ENCODE measurements at regions of chr7 and their contacts with region 1.

Region 1: GRCh38 chr7:25093268-25093826 is 31.7 kb downstream of the CYCS start:
- DNase-seq: peak; percentile 88
- H3K4me3 Mint-ChIP-seq: no peak overlapping the region
- H3K27ac Mint-ChIP-seq: no peak overlapping the region
- H3K4me1 Mint-ChIP-seq: peaks cover 14% of the 10 kb centered on the region
- H3K27me3 Mint-ChIP-seq: peaks cover 2% of the 10 kb centered on the region

Region 2: GRCh38 chr7:24572997-24573625 is 520.2 kb before region 1 on chr7 and contains the start of gene PALS2:
- CTCF ChIA-PET with region 1: interaction called, 7 read pairs
- POLR2A ChIA-PET with region 1: no interaction called
- intact Hi-C with region 1: loop called (anchors 1 kb)
- DNase-seq: peak; percentile 82
- H3K4me3 Mint-ChIP-seq: peak within 1 kb of the TSS; percentile 83
- H3K27ac Mint-ChIP-seq: peak within 1 kb of the TSS; percentile 70
- H3K4me1 Mint-ChIP-seq: peaks cover 28% of the 10 kb centered on the region
- H3K27me3 Mint-ChIP-seq: peaks cover 3% of the 10 kb centered on the region
- total RNA-seq, gene PALS2: 21.0 to 22.9 TPM

Region 3: DNA sequence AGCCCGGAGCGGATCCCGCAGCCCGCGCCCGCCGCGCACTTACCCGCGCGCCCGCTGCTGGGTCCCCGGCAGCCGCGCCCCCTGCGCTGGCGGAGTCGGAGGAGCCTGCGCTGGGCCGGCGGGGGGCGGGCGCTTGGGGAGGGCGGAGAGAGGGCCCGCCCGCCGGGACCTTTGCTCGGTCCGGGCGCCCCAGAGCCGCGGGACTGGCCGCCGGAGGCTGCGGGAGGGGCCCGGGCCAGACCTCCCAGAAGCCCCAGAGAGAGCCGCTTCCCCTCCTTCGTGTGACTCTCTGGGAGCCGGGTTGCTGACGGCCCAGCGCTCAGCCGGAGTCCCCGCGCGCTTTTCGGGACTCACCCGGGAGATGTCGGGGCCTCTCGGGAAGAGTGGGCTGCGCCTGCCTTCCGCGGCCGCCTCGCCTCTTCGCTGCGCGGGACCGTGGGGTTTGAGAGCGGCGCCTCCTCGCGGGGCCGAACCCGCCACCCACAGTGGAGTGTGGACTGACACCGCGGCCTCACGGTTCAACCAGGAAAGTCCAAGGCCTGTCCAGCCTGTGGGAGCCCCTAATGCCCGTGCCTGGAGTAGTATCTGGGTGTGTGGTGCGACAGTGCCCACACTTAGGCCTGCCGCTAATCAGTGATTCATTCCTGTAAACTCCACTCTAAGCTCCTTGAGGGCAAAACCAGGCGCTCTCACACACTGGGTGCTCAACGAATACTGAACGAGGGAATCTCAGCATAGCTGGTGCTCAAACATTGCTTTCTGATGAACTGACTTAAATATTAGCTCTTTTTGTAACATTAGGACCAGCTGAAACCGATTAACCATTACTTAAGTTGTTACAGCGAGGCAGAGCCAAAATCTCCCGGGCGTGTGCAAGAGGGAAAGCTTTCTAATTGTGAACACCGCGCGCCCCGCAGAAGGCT is 335.7 kb before region 1 on chr7 and contains the start of gene GSDME:
- CTCF ChIA-PET with region 1: interaction called, 11 read pairs
- POLR2A ChIA-PET with region 1: no interaction called
- intact Hi-C with region 1: loop called (anchors 1 kb)
- DNase-seq: peak; percentile 35
- H3K4me3 Mint-ChIP-seq: peak within 1 kb of the TSS; percentile 78
- H3K27ac Mint-ChIP-seq: no peak within 1 kb of the TSS
- H3K4me1 Mint-ChIP-seq: peaks cover 30% of the 10 kb centered on the region
- H3K27me3 Mint-ChIP-seq: peaks cover 45% of the 10 kb centered on the region
- total RNA-seq, gene GSDME: 4.7 TPM

Region 4: DNA sequence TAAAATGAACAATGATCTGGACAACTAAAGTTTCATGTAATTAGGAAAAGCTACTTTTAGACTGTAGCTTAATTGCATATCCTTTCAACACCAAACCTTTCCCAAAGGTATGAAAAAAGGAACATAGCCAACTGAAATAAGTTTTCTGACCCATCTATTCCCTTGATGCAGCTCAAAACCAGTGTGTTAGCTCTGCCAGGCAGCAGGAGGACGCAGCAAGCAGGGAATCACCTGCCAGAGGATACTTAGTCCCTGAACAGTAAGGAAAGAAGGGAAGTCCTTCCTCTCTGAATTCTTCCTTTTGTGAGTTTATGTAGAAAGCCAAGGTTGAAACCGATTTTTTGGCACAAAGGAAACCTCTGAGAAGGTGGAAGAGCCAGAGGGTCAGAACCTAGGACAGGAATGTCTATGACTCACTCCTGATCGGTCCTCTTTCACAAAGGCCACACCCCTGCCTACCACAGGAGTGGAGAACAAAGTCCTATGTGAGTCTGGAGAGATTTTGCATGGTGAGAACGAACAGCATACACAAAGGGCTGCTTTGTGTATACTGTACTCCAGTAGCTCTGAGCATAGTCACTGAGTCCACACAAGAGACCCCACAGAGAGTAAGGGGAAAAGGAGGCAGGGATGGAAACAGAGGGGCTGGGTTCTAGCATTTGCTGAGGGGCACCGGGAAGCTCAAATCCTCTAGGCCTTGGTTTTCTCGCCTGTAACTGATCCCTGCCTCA is 267.3 kb before region 1 on chr7:
- CTCF ChIA-PET with region 1: interaction called, 72 read pairs
- POLR2A ChIA-PET with region 1: no interaction called
- intact Hi-C with region 1: loop called (anchors 1 kb)
- DNase-seq: no peak
- H3K4me3 Mint-ChIP-seq: peak overlapping the region; percentile 28
- H3K27ac Mint-ChIP-seq: peak overlapping the region; percentile 43
- H3K4me1 Mint-ChIP-seq: peaks cover 67% of the 10 kb centered on the region
- H3K27me3 Mint-ChIP-seq: no peaks in the 10 kb centered on the region

Region 5: DNA sequence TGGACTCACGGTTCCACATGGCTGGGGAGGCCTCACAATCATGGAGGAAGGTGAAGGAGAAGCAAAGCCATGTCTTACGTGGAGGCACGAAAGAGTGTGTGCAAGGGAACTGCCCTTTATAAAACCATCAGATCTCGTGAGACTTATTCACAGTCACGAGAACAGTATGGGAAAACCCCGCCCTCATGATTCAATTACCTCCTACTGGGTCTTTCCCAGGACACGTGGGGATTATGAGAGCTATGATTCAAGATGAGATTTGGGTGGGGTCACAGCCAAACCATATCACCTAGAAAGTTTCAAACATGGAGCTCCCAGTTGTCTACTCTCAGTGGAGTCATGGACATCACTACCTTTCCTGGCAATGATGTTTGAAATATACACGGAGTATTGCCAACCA is 17.9 kb before region 1 on chr7:
- CTCF ChIA-PET with region 1: interaction called, 38 read pairs
- POLR2A ChIA-PET with region 1: no interaction called
- intact Hi-C with region 1: no loop called
- DNase-seq: peak; percentile 53
- H3K4me3 Mint-ChIP-seq: no peak overlapping the region
- H3K27ac Mint-ChIP-seq: no peak overlapping the region
- H3K4me1 Mint-ChIP-seq: peaks cover 13% of the 10 kb centered on the region
- H3K27me3 Mint-ChIP-seq: no peaks in the 10 kb centered on the region

Region 6: GRCh38 chr7:25282194-25282593 is 188.8 kb after region 1 on chr7:
- CTCF ChIA-PET with region 1: no interaction called
- POLR2A ChIA-PET with region 1: no interaction called
- intact Hi-C with region 1: no loop called
- DNase-seq: no peak
- H3K4me3 Mint-ChIP-seq: no peak overlapping the region
- H3K27ac Mint-ChIP-seq: no peak overlapping the region
- H3K4me1 Mint-ChIP-seq: no peaks in the 10 kb centered on the region
- H3K27me3 Mint-ChIP-seq: peaks cover 6% of the 10 kb centered on the region

Measured in activated CD4-positive, alpha-beta memory T cell treated with anti-CD3 and anti-CD28 coated beads for 36 hours (primary cell).